ENCODE measurements at regions of chr2 and their contacts with region 1.

Region 1: GRCh38 chr2:8234757-8235374 is 447.0 kb upstream of the ID2 start:
- DNase-seq: no peak
- H3K4me3 Mint-ChIP-seq: no peak overlapping the region
- H3K27ac Mint-ChIP-seq: no peak overlapping the region
- H3K4me1 Mint-ChIP-seq: peaks cover 34% of the 10 kb centered on the region
- H3K27me3 Mint-ChIP-seq: peaks cover 4% of the 10 kb centered on the region

Region 2: GRCh38 chr2:7857904-7858303 is 377.0 kb before region 1 on chr2:
- intact Hi-C with region 1: loop called (anchors 10 kb)
- DNase-seq: no peak
- H3K4me3 Mint-ChIP-seq: no peak overlapping the region
- H3K27ac Mint-ChIP-seq: peak overlapping the region; percentile 81
- H3K4me1 Mint-ChIP-seq: peaks cover 34% of the 10 kb centered on the region
- H3K27me3 Mint-ChIP-seq: no peaks in the 10 kb centered on the region

Region 3: DNA sequence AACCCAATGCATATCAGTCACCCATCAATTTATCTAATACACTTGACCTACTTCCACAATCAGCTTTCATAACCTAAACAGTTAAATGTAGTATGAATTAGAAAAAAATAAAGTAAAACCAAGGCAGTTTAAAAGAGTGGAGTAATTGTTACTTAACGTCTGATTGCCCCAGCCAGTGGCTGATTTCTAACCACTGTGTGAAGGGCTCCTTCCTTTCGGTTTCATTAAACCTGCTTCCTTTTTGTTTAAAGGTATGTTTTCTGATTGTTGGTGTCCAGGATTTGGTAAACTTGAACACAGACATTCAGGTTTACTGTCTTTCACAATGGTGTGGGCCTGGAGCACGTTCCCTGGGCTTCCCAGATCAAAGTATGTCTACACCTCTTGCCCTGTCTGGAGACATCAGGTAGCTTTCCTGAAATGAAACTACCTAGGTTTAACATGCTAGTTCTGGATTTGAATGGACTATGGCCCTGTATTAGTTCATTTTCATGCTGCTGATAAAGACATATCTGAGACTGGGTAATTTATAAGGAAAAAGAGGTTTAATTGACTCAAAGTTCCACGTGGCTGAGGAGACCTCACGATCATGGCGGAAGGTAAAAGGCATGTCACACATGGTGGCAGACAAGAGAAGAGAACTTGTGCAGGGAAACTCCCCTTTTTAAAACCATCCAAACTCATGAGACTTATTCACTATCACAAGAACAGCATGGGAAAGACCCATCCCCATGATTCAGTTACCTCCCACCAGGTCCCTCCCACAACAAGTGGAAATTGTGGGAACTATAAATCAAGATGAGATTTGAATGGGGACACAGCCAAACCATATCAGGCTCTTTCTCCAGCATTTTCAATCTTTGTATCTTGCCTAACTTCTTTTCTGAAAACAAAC is 158.2 kb before region 1 on chr2:
- intact Hi-C with region 1: no loop called
- DNase-seq: no peak
- H3K4me3 Mint-ChIP-seq: no peak overlapping the region
- H3K27ac Mint-ChIP-seq: peak overlapping the region; percentile 60
- H3K4me1 Mint-ChIP-seq: peaks cover 8% of the 10 kb centered on the region
- H3K27me3 Mint-ChIP-seq: no peaks in the 10 kb centered on the region

Region 4: GRCh38 chr2:8281950-8282857 is 47.3 kb after region 1 on chr2:
- intact Hi-C with region 1: loop called (anchors 5 kb)
- DNase-seq: no peak
- H3K4me3 Mint-ChIP-seq: peak overlapping the region; percentile 6
- H3K27ac Mint-ChIP-seq: no peak overlapping the region
- H3K4me1 Mint-ChIP-seq: peaks cover 36% of the 10 kb centered on the region
- H3K27me3 Mint-ChIP-seq: peaks cover 2% of the 10 kb centered on the region

Region 5: DNA sequence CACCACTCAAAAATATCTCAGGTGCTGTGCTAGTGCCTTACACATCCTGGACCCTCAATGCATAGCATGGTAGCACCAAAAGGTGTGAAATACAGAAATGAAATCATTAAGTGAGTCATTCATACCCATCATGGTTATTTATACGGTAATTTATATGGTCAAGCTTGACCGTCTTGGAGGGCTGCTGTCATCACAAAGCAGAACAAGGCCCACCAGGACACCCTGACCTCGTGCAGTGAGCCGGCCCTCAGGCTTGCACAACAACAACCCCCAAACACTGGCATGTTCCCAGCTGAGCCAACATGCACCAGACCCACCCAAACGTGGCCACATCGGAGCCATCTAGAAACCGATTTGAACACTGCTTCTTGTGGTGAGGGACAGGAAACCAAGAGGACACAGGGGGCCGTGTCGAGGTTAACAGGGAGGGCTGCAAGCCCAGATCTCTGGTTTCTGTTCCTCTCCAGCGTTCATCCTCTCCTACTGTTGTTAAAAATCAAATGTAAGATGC is 68.5 kb after region 1 on chr2:
- intact Hi-C with region 1: loop called (anchors 5 kb)
- DNase-seq: peak; percentile 82
- H3K4me3 Mint-ChIP-seq: peak overlapping the region; percentile 49
- H3K27ac Mint-ChIP-seq: peak overlapping the region; percentile 47
- H3K4me1 Mint-ChIP-seq: peaks cover 81% of the 10 kb centered on the region
- H3K27me3 Mint-ChIP-seq: no peaks in the 10 kb centered on the region

Measured in activated T-helper 2 cell treated with anti-CD3 and anti-CD28 coated beads, Interferon-gamma antibody, Interleukin-2, Interleukin-4, amounts not matched to agents 10 μg/mL and 5 μg/mL and 100 μg/mL, durations not matched to agents 14 hours and 24 hours and 36 hours (primary cell).